A549 (cell line): ENCODE measurements at regions of chr14 and their contacts with region 1.

Region 1: GRCh38 chr14:31207755-31208545 is at the start of gene HECTD1:
- DNase-seq: peak; percentile 85 to 92
- ATAC-seq: peak; percentile 89 to 90
- H3K4me3 ChIP-seq: peak within 1 kb of the TSS; percentile 92
- H3K27ac ChIP-seq: peak within 1 kb of the TSS; percentile 96 to 99
- H3K4me1 ChIP-seq: peaks cover 16% of the 10 kb centered on the region
- CTCF ChIP-seq: peak; percentile 90
- EP300 ChIP-seq: no peak
- POLR2A ChIP-seq: peak; percentile 95
- RAD21 ChIP-seq: peak; percentile 36 to 86; a peak in 4 of 5 replicates
- polyA plus RNA-seq, gene HECTD1: 149 and 154 TPM in 2 replicates

Region 2: DNA sequence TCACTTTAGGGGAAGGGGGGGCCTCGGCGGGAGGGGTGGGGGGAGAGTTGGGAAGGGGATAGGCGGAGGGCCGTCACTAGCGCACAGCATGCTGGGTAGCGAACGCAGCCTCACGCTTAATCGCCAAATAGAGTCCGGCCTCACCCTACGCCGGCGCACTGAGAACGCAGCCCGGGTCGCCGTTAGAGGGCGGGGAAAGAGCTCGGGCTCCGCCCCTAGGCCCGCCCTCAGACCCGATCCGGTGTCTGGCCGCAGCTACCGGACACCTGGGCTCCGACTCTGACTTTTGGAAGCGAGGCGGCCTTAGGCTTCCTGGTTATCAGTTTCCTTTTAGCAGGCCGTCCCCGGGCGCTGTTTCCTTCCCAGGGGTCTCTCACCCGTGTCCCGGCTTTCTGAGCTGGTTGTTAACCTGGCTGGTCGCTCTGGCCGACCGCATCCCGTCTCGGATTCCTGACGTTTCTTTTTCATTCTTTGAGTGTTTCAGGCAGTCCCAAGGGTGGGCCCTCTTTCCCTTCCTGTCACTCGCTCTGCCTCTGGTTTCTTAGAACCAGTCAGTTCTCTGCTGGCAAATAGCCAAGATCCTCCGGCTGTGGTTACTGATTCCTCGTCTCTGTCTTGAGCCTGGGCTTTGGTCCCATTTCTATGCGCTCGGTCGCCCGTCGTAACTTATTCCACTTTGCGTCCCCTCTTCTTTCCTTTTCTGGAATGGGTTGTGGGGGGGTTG is 181.4 kb before region 1 on chr14:
- CTCF ChIA-PET with region 1: no interaction called
- POLR2A ChIA-PET with region 1: interaction called, 13 read pairs
- DNase-seq: peak; percentile 87 to 97
- ATAC-seq: peak; percentile 90 to 96
- H3K4me3 ChIP-seq: peak overlapping the region; percentile 99
- H3K27ac ChIP-seq: peak overlapping the region; percentile 99
- H3K4me1 ChIP-seq: peaks cover 52% of the 10 kb centered on the region
- CTCF ChIP-seq: no peak
- EP300 ChIP-seq: no peak
- POLR2A ChIP-seq: no peak
- RAD21 ChIP-seq: no peak; a peak in 1 of 5 replicates

Region 3: GRCh38 chr14:31194661-31195060 is 13.3 kb before region 1 on chr14:
- CTCF ChIA-PET with region 1: interaction called, 7 read pairs
- POLR2A ChIA-PET with region 1: interaction called, 13 read pairs
- DNase-seq: no peak
- ATAC-seq: no peak
- H3K4me3 ChIP-seq: no peak overlapping the region
- H3K27ac ChIP-seq: peak overlapping the region in 1 of 2 experiments; percentile 76; a peak in 1 of 6 replicates
- H3K4me1 ChIP-seq: peaks cover 48% of the 10 kb centered on the region
- CTCF ChIP-seq: no peak
- EP300 ChIP-seq: no peak
- POLR2A ChIP-seq: no peak
- RAD21 ChIP-seq: no peak

Region 4: DNA sequence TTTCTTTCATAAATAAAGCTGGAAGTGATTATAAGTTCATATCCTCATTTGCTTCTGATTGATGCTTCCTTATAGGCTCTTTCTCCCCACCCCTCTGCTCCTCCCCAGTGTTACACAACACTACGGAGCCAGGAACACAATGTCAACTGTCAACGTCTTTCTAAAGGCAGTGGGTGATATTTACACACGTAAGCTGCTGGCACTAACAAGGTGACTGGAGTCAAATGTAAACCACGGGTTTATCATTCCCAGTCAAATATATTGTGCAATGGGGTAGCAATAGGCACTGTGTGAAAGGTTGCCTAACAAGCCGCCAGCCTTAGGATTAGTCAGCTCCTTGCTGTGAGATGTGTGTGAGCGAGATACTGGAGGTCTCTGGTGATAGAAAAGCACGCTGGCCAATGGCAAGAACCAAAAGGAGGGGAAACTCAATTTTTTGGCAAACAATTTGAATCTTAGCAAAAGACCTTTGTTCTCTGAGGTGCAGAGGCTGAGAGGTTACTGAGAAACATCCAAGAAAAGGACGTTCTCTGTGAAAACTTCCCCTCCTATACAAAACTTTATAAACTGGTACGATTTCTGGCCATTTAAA is 21.8 kb after region 1 on chr14:
- CTCF ChIA-PET with region 1: interaction called, 30 read pairs
- POLR2A ChIA-PET with region 1: interaction called, 51 read pairs
- DNase-seq: peak; percentile 98 to 99
- ATAC-seq: peak; percentile 99
- H3K4me3 ChIP-seq: peak overlapping the region; percentile 31
- H3K27ac ChIP-seq: peak overlapping the region; percentile 80 to 87
- H3K4me1 ChIP-seq: peaks cover 39% of the 10 kb centered on the region
- CTCF ChIP-seq: no peak
- EP300 ChIP-seq: peak; percentile 81 to 93; a peak in 3 of 5 replicates
- POLR2A ChIP-seq: no peak
- RAD21 ChIP-seq: peak; percentile 20 to 55

Region 5: DNA sequence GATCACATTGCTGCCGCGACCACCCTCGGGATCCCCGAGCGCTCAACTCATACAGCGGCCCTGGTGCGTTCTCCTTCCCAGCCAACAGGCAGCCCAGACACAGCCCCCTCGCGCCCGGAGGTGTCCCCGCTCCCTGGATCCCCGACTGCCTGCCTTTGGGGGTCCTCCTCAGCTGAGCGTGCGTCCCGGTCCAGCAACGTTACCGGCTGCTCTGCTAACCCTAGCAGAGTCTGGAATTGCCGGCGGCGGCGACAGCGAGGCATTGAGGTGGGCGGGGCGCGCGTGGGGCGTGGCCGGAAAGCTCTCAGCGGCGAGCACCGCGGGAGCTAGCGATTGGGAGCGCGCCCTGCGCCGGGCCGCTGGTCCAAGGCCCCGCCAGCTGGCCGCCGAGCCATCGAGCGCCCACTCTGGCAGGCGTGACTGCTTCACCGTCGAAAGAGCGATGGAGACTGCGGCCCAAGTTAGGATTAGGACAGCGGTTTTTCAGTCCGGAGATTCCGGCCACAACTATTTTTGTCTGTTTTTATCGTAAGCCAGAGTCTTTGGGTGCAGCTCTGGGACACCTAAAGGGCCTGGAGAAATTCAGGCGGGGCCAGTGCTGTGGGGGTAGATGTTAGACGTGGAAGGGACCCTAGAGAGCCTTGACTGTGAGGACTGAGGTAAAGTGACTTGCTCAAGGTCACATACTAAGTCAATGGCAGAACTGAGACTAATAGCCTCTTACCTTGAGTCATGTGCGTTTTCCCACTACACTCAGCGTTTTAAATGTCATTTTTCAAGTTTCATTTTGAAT is 212.6 kb after region 1 on chr14 and contains the start of gene HEATR5A:
- CTCF ChIA-PET with region 1: interaction called, 6 read pairs
- POLR2A ChIA-PET with region 1: interaction called, 16 read pairs
- DNase-seq: peak; percentile 78 to 94
- ATAC-seq: peak; percentile 95 to 96
- H3K4me3 ChIP-seq: peak within 1 kb of the TSS; percentile 95
- H3K27ac ChIP-seq: peak within 1 kb of the TSS; percentile 85 to 95
- H3K4me1 ChIP-seq: peaks cover 25% of the 10 kb centered on the region
- CTCF ChIP-seq: no peak
- EP300 ChIP-seq: no peak
- POLR2A ChIP-seq: peak; percentile 100
- RAD21 ChIP-seq: no peak
- polyA plus RNA-seq, gene HEATR5A: 47.1 and 49.5 TPM in 2 replicates